ENCODE measurements at regions of chr1 and their contacts with region 1.

Region 1: DNA sequence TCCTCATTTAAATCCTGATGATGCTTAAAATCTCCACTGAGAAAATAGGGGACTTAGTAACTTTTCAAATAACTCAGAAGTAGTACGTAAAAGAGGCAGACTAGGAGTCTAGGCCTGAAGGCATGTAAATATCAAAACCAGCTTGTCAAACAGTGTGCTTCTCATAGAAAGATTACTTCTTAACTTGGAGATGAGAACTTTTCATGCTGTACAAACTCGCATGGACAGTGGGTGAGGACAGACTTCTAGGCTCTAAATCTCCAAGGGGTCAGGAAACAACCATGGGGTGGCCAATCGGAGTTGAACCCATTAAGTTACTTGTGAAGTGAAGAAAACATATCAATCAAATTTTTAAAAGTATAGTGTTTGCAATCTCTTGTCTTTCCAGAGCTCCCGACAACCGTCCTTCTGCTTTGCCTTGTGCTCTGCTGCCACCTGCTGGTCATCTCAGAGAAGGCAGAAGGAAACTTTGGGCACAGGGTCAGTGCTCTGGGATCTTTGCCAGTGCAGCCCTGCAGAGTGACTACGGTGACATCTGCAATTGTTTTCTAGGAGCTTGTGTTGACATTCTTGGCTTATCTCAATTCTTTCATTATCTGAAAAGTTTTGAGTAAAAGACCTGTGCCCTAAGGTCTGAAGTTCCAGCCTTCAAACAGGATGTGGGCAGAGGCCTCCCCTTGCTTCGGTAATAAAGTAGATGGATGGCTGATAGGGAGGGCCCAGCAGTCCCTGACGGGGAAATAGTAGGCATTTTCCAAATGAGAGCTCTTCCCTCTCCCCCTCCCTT is 105.1 kb upstream of the PDE4B start:
- DNase-seq: peak; percentile 79
- ATAC-seq: peak; percentile 92
- H3K4me3 Mint-ChIP-seq: no peak overlapping the region
- H3K27ac Mint-ChIP-seq: no peak overlapping the region
- H3K4me1 Mint-ChIP-seq: peaks cover 11% of the 10 kb centered on the region
- H3K27me3 Mint-ChIP-seq: peaks cover 12% of the 10 kb centered on the region

Region 2: GRCh38 chr1:65066766-65067490 is 620.7 kb before region 1 on chr1:
- CTCF ChIA-PET with region 1: interaction called, 19 read pairs
- POLR2A ChIA-PET with region 1: no interaction called
- DNase-seq: peak; percentile 70
- ATAC-seq: peak; percentile 70
- H3K4me3 Mint-ChIP-seq: peak overlapping the region; percentile 89
- H3K27ac Mint-ChIP-seq: peak overlapping the region; percentile 72
- H3K4me1 Mint-ChIP-seq: peaks cover 34% of the 10 kb centered on the region
- H3K27me3 Mint-ChIP-seq: no peaks in the 10 kb centered on the region

Region 3: GRCh38 chr1:65209005-65209885 is 478.4 kb before region 1 on chr1:
- CTCF ChIA-PET with region 1: interaction called, 10 read pairs
- POLR2A ChIA-PET with region 1: no interaction called
- DNase-seq: peak; percentile 37
- ATAC-seq: peak; percentile 34
- H3K4me3 Mint-ChIP-seq: no peak overlapping the region
- H3K27ac Mint-ChIP-seq: no peak overlapping the region
- H3K4me1 Mint-ChIP-seq: peaks cover 28% of the 10 kb centered on the region
- H3K27me3 Mint-ChIP-seq: no peaks in the 10 kb centered on the region

Region 4: GRCh38 chr1:65230731-65231481 is 456.7 kb before region 1 on chr1:
- CTCF ChIA-PET with region 1: interaction called, 47 read pairs
- POLR2A ChIA-PET with region 1: no interaction called
- DNase-seq: no peak
- ATAC-seq: no peak
- H3K4me3 Mint-ChIP-seq: no peak overlapping the region
- H3K27ac Mint-ChIP-seq: peak overlapping the region; percentile 44
- H3K4me1 Mint-ChIP-seq: peaks cover 22% of the 10 kb centered on the region
- H3K27me3 Mint-ChIP-seq: no peaks in the 10 kb centered on the region

Region 5: GRCh38 chr1:65254319-65255034 is 433.1 kb before region 1 on chr1:
- CTCF ChIA-PET with region 1: interaction called, 11 read pairs
- POLR2A ChIA-PET with region 1: no interaction called
- DNase-seq: peak; percentile 89
- ATAC-seq: peak; percentile 99
- H3K4me3 Mint-ChIP-seq: peak overlapping the region; percentile 78
- H3K27ac Mint-ChIP-seq: no peak overlapping the region
- H3K4me1 Mint-ChIP-seq: peaks cover 23% of the 10 kb centered on the region
- H3K27me3 Mint-ChIP-seq: peaks cover 26% of the 10 kb centered on the region

Region 6: GRCh38 chr1:65703853-65704252 is 16.2 kb after region 1 on chr1:
- CTCF ChIA-PET with region 1: interaction called, 18 read pairs
- POLR2A ChIA-PET with region 1: no interaction called
- DNase-seq: no peak
- ATAC-seq: no peak
- H3K4me3 Mint-ChIP-seq: no peak overlapping the region
- H3K27ac Mint-ChIP-seq: no peak overlapping the region
- H3K4me1 Mint-ChIP-seq: no peaks in the 10 kb centered on the region
- H3K27me3 Mint-ChIP-seq: peaks cover 21% of the 10 kb centered on the region

Region 7: GRCh38 chr1:65725064-65725463 is 37.4 kb after region 1 on chr1:
- CTCF ChIA-PET with region 1: no interaction called
- POLR2A ChIA-PET with region 1: no interaction called
- DNase-seq: no peak
- ATAC-seq: no peak
- H3K4me3 Mint-ChIP-seq: no peak overlapping the region
- H3K27ac Mint-ChIP-seq: no peak overlapping the region
- H3K4me1 Mint-ChIP-seq: no peaks in the 10 kb centered on the region
- H3K27me3 Mint-ChIP-seq: peaks cover 4% of the 10 kb centered on the region

Measured in activated CD8-positive, alpha-beta T cell treated with anti-CD3 and anti-CD28 coated beads, Interleukin-2, amount 10 ng/mL, durations not matched to agents 7 days and 5 days (primary cell).